Activated CD4-positive, alpha-beta T cell treated with anti-CD3 and anti-CD28 coated beads for 36 hours (primary cell): ENCODE measurements at regions of chr17 and their contacts with region 1.

Region 1: GRCh38 chr17:80477647-80478478 is 1.5 kb upstream of the NPTX1 start:
- DNase-seq: peak; percentile 73
- ATAC-seq: peak; percentile 55
- H3K4me3 Mint-ChIP-seq: no peak overlapping the region
- H3K27ac Mint-ChIP-seq: no peak overlapping the region
- H3K4me1 Mint-ChIP-seq: peaks cover 13% of the 10 kb centered on the region
- H3K27me3 Mint-ChIP-seq: peaks cover 49% of the 10 kb centered on the region

Region 2: GRCh38 chr17:80454557-80455335 is 23.1 kb before region 1 on chr17:
- CTCF ChIA-PET with region 1: interaction called, 6 read pairs
- POLR2A ChIA-PET with region 1: interaction called, 4 read pairs
- intact Hi-C with region 1: loop called in 1 of 2 experiments (anchors 1 kb)
- DNase-seq: peak; percentile 98
- ATAC-seq: peak; percentile 93
- H3K4me3 Mint-ChIP-seq: peak overlapping the region; percentile 99
- H3K27ac Mint-ChIP-seq: peak overlapping the region; percentile 94
- H3K4me1 Mint-ChIP-seq: peaks cover 23% of the 10 kb centered on the region
- H3K27me3 Mint-ChIP-seq: peaks cover 13% of the 10 kb centered on the region

Region 3: GRCh38 chr17:80899402-80900268 is 421.8 kb after region 1 on chr17:
- CTCF ChIA-PET with region 1: no interaction called
- POLR2A ChIA-PET with region 1: no interaction called
- intact Hi-C with region 1: loop called in 1 of 2 experiments (anchors 5 kb)
- DNase-seq: peak; percentile 92
- ATAC-seq: peak; percentile 82
- H3K4me3 Mint-ChIP-seq: no peak overlapping the region
- H3K27ac Mint-ChIP-seq: no peak overlapping the region
- H3K4me1 Mint-ChIP-seq: peaks cover 56% of the 10 kb centered on the region
- H3K27me3 Mint-ChIP-seq: no peaks in the 10 kb centered on the region

Region 4: DNA sequence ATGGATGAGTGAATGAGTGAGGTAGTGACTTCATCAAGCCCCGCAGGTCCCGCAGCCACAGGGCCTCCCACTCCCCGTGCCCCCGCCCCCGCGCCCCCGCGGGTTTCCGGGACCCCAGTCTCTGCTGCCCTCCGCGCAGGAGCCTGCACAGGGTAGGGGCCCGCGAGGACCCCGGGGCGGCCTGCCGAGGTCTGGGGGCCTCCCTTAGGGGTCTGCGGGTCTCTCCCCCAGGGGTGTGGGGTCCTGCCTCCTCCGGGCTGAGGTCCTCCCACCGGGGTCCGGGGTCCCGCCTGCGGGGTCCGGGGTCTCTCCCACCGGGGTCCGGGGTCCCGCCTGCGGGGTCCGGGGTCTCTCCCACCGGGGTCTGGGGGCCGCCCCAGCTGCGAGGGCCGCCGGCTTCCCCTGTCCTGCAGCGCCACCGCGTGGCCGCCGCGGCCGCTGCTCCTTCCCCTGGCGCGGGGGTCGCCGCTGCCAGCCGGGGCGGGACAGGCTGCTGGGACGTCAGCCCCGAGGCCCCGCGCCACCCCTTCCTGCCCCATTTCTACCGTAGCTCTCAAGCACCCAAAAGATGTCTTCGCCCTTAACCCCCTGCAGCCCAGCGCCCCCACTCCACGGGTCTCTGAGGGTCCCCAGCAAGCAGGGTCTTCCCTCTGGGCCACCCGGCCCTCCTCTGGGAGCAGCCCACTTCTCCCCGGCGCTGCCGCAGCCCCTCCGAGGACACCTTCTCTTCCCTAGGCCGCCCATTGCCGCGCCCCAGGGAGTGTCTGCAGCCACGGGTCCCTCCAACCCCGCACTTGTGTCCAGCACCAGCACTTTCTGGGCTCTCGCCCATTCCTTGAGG is 503.4 kb after region 1 on chr17:
- CTCF ChIA-PET with region 1: no interaction called
- POLR2A ChIA-PET with region 1: no interaction called
- intact Hi-C with region 1: loop called in 1 of 2 experiments (anchors 1 kb)
- DNase-seq: peak; percentile 66
- ATAC-seq: peak; percentile 43
- H3K4me3 Mint-ChIP-seq: no peak overlapping the region
- H3K27ac Mint-ChIP-seq: no peak overlapping the region
- H3K4me1 Mint-ChIP-seq: peaks cover 9% of the 10 kb centered on the region
- H3K27me3 Mint-ChIP-seq: peaks cover 5% of the 10 kb centered on the region